Endothelial cell of umbilical vein (primary cell): ENCODE measurements at regions of chr2 and their contacts with region 1.

Region 1: DNA sequence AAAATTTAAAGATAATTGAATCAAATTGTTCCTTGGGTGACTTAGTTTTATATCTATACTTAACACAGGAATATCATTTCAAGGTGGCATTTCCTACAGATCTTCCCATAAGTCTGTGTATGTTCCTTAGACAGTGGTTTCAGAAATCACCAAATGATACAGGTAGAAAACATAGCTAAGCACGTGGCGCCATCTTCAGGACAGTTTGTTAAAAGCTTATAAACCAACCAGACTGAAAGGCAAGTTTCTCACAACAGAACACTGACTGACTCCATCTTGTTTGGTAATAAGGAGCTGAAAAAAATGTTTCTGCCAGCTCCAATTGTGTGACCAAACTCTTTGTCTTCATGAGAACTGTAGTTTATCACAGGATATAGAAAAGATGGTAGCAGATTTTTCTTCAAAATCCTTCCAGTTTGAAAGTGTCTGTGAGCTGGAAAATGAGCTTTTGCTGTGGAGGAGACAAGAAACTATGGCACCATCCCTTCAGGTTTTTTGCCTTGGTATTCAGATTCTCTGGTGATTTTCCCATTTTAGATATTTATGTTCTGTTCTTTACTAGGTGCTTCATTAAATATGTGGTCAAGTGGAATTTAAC is 34.8 kb upstream of the NEUROD1 start:
- DNase-seq: peak; percentile 81
- H3K4me3 ChIP-seq: no peak overlapping the region
- H3K27ac ChIP-seq: no peak overlapping the region
- H3K4me1 ChIP-seq: no peaks in the 10 kb centered on the region
- H3K27me3 ChIP-seq: peaks cover 2 to 12% of the 10 kb centered on the region in 2 experiments
- CTCF ChIP-seq: peak; percentile 48 to 54
- POLR2A ChIP-seq: no peak

Region 2: DNA sequence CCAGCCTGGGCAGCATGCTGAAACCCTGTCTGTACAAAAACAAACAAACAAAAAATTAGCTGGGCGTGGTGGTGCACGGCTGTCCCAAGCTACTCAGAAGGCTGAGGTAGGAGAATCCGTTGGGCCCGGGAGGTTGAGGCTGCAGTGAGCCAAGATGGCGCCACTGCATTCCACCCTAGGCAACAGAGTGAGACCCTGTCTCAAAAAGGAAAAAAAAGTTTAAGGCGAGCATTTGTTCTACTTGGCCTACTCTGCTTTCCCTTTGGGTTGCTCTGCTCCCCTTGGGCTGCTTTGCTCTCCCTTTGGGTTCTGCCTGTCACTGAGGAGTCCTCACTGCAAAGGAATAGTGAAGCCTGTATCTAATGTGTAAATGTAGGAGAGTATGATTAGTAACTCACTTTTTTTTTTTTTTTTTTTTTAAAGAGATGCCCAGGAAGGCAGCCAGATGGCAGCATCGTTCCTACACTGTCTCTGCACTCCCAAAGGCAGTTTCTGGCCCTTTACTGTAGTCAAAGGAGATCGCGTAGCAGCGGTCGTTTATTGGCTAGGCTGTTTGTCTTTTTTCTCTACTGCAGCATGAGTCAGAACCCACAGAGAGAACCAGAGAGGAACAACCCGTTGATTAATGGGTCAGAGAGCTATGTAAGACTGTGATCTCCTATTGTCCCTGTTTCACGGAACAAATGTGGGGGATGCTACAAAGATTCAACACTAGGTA is 1589.7 kb before region 1 on chr2:
- CTCF ChIA-PET with region 1: interaction called, 221 read pairs
- POLR2A ChIA-PET with region 1: no interaction called
- dilution Hi-C with region 1: no loop called
- intact Hi-C with region 1: loop called (anchors 1 kb)
- DNase-seq: peak; percentile 80
- H3K4me3 ChIP-seq: no peak overlapping the region
- H3K27ac ChIP-seq: no peak overlapping the region
- H3K4me1 ChIP-seq: no peaks in the 10 kb centered on the region
- H3K27me3 ChIP-seq: peaks cover 4 to 12% of the 10 kb centered on the region in 2 experiments
- CTCF ChIP-seq: peak; percentile 38 to 55
- POLR2A ChIP-seq: no peak

Region 3: DNA sequence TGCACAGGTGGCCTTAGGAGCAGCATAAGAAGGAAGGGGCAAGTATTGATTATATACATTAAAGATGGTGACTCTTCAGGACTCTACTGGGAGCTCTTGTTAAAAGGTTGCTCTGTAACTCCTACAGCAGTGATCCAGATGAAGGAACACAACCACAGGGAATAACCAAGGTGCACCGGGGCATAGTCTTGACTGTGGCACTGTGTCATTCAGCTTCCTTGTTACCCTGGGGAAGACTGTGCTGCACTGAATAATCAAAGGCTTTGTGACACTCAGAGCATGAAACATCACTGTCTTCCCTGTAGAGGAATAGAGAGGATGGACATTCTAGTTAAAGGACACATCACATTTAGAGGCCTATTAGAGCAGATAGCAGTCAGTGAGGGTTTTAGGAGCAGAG is 629.4 kb before region 1 on chr2:
- CTCF ChIA-PET with region 1: interaction called, 11 read pairs
- POLR2A ChIA-PET with region 1: no interaction called
- dilution Hi-C with region 1: no loop called
- intact Hi-C with region 1: no loop called
- DNase-seq: no peak
- H3K4me3 ChIP-seq: no peak overlapping the region
- H3K27ac ChIP-seq: no peak overlapping the region
- H3K4me1 ChIP-seq: no peaks in the 10 kb centered on the region
- H3K27me3 ChIP-seq: no peaks in the 10 kb centered on the region
- CTCF ChIP-seq: no peak
- POLR2A ChIP-seq: no peak

Region 4: GRCh38 chr2:181466661-181467576 is 248.2 kb before region 1 on chr2:
- CTCF ChIA-PET with region 1: interaction called, 25 read pairs
- POLR2A ChIA-PET with region 1: no interaction called
- dilution Hi-C with region 1: no loop called
- intact Hi-C with region 1: loop called (anchors 2 kb)
- DNase-seq: peak; percentile 41
- H3K4me3 ChIP-seq: no peak overlapping the region
- H3K27ac ChIP-seq: no peak overlapping the region
- H3K4me1 ChIP-seq: no peaks in the 10 kb centered on the region
- H3K27me3 ChIP-seq: peaks cover 4 to 10% of the 10 kb centered on the region in 2 experiments
- CTCF ChIP-seq: peak; percentile 69 to 70
- POLR2A ChIP-seq: no peak

Region 5: DNA sequence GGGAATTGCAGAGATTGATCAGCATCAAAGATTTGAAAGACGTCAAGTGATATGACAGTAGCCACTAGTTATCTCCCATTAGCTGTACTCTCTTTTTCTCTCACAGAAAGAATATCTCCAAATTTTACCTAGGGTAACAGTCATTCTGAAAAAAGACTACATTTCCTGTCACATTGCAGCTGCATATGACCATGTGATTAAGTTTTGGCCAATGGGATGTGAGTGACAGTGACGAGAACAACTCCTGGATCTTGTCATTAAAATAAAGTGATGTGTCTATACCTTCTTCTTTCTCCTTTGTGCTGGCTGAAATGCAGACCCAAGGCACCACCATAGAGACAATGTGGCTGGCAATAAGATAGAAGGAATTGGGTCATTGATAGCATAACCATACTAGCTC is 24.3 kb before region 1 on chr2:
- CTCF ChIA-PET with region 1: interaction called, 11 read pairs
- POLR2A ChIA-PET with region 1: no interaction called
- dilution Hi-C with region 1: no loop called
- intact Hi-C with region 1: no loop called
- DNase-seq: no peak
- H3K4me3 ChIP-seq: no peak overlapping the region
- H3K27ac ChIP-seq: no peak overlapping the region
- H3K4me1 ChIP-seq: no peaks in the 10 kb centered on the region
- H3K27me3 ChIP-seq: peaks cover 6 to 21% of the 10 kb centered on the region in 2 experiments
- CTCF ChIP-seq: no peak
- POLR2A ChIP-seq: no peak

Region 6: GRCh38 chr2:181904022-181904632 is 189.0 kb after region 1 on chr2:
- CTCF ChIA-PET with region 1: interaction called, 29 read pairs
- POLR2A ChIA-PET with region 1: no interaction called
- dilution Hi-C with region 1: no loop called
- intact Hi-C with region 1: no loop called
- DNase-seq: peak; percentile 89
- H3K4me3 ChIP-seq: peak overlapping the region in 1 of 3 experiments; percentile 23
- H3K27ac ChIP-seq: peak overlapping the region; percentile 29
- H3K4me1 ChIP-seq: peaks cover 48% of the 10 kb centered on the region
- H3K27me3 ChIP-seq: no peaks in the 10 kb centered on the region
- CTCF ChIP-seq: peak; percentile 40 to 50
- POLR2A ChIP-seq: no peak

Region 7: DNA sequence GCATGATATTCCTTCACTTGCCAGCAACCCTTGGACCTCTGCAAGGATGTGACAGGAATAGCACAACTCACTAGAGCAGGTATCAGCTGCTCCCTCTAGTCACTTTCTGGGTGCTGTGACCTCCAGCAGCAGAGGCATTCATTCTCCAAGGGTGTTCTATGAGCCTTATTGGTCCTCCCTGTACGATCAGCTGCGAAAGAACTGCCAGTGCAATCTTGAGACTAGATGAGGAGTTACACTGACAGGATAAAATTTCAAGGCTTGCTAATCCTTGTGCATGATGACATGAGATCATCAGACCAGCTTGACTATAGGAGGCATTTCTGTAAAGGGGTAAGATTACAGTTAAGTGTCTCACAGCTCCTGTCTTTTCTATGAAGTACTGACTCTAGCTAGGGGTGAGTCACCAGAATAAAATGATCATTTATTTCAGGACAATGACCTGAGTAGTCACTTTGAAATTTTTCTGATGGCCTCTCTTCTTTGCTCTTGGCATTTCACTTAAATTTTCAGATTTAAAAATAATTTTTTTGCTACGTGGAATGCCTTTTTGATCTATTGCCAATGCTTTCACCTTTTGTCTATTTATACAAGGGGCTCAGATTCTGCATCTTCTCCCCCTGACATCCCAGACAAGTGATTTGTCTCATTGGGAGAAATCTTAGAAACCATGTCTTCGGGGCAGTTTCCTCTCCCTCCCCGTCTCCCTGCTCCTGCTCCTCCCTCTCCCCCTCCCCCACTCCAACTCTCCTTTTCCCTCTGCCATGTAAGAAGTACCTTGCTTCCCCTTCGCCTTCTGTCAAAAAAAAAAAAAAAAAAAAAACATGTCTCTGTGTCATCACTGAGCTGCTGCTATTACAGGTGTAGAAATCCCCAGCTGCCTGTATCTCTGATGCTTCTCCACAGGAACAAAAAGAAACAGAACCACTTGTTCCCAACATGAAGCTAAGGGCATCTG is 1200.5 kb after region 1 on chr2:
- CTCF ChIA-PET with region 1: no interaction called
- POLR2A ChIA-PET with region 1: no interaction called
- dilution Hi-C with region 1: no loop called
- intact Hi-C with region 1: no loop called
- DNase-seq: no peak
- H3K4me3 ChIP-seq: no peak overlapping the region
- H3K27ac ChIP-seq: no peak overlapping the region
- H3K4me1 ChIP-seq: no peaks in the 10 kb centered on the region
- H3K27me3 ChIP-seq: no peaks in the 10 kb centered on the region
- CTCF ChIP-seq: no peak
- POLR2A ChIP-seq: no peak